HEK293T (cell line): ENCODE measurements at regions of chr10 and their contacts with region 1.

Region 1: DNA sequence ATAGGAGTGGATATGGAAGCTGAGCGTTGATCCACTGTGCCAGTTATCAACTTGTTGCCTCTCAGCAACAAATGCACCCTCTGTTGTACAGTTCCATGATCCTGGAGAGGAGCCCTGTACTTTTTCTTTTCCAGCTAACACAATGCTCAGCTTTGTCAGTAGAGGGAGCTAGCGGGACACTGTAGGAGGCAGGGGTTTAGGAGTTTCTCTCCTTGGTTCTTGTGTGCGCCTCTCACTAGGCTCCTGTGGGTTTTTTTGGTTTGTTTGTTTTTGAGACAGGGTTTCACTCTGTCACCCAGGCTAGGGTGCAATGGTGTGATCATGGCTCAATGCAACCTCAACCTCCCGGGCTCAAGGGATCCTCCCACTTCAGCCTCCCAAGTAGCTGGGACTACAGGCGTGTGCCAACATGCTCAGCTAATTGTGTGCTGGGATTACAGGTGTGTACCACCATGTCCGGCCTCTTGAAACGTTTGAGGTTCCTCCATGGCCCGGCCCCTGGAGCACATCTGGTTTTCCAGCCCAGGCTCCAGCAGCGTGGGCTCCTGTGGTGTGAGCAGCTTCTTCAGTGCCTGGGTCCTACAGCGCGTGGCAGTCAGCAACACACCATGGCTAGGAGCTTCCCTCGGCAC is 12.0 kb upstream of the MARVELD1 start:
- DNase-seq: peak; percentile 89

Region 2: GRCh38 chr10:97584060-97584797 is 117.3 kb before region 1 on chr10 and contains the start of gene HOGA1:
- CTCF ChIA-PET with region 1: no interaction called
- POLR2A ChIA-PET with region 1: no interaction called
- DNase-seq: peak; percentile 53

Region 3: GRCh38 chr10:97714048-97714371 is 12.5 kb after region 1 on chr10:
- CTCF ChIA-PET with region 1: interaction called, 17 read pairs
- POLR2A ChIA-PET with region 1: interaction called, 16 read pairs
- DNase-seq: peak; percentile 78

Region 4: GRCh38 chr10:97724341-97724941 is 22.9 kb after region 1 on chr10:
- CTCF ChIA-PET with region 1: interaction called, 11 read pairs
- POLR2A ChIA-PET with region 1: interaction called, 3 read pairs
- DNase-seq: no peak

Region 5: GRCh38 chr10:97731346-97732051 is 29.9 kb after region 1 on chr10:
- CTCF ChIA-PET with region 1: interaction called, 30 read pairs
- POLR2A ChIA-PET with region 1: interaction called, 7 read pairs
- DNase-seq: peak; percentile 76

Region 6: GRCh38 chr10:97736902-97737769 is 35.6 kb after region 1 on chr10 and contains the start of gene ZFYVE27:
- CTCF ChIA-PET with region 1: interaction called, 30 read pairs
- POLR2A ChIA-PET with region 1: interaction called, 7 read pairs
- DNase-seq: peak; percentile 100